ENCODE measurements at regions of chr19 and their contacts with region 1.

Region 1: DNA sequence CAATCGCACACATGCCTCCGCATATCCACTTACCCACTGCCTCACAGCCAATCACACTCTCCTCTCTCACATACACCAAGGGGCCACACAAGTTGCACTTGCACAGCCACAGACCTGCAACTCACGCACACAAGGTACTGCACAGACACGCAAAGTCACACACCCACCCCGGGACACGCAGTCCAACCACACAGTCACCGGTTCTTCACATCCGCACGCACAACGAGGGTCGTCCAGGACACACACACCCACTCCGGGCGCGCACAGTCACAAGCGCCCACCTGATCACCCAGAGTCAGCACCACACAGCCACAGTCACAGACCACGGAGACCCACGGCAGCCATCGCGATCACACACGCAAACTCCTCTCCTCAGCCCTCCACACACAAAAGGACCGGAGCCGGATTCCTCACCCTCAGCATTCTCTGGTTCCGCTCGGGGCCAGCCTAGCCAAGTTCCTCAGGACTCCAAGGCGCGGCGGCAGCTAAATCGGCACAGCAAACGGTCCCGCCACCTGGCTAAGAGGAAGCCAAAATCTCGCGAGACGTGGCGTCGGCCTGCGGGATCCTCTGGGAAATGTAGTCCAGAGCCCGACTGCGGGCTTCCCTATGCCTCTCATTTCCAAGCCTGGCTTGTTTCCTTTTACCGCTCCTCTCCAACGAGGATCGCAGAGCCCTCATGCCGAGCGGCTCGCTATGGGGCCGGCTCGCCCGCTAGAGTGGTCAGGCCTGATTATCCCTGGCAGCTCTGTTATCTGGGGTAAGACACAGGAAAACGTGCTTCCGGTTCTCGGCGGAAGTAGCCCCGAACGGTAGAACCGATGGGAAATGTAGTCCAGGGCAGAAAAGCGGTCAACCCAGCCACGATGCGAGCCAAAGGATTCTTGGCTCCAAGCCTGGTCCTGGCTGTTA is at the start of gene ZNF850:
- DNase-seq: peak; percentile 86 to 97 (median 95)
- ATAC-seq: peak; percentile 90
- H3K4me3 ChIP-seq: peak within 1 kb of the TSS; percentile 77 to 100
- H3K4me3 Mint-ChIP-seq: peak within 1 kb of the TSS; percentile 99
- H3K27ac ChIP-seq: peak within 1 kb of the TSS; percentile 85 to 89
- H3K27ac Mint-ChIP-seq: peak within 1 kb of the TSS; percentile 94
- H3K4me1 ChIP-seq: peaks cover 21% of the 10 kb centered on the region
- H3K4me1 Mint-ChIP-seq: peaks cover 23% of the 10 kb centered on the region
- H3K27me3 ChIP-seq: no peaks in the 10 kb centered on the region
- H3K27me3 Mint-ChIP-seq: no peaks in the 10 kb centered on the region
- CTCF ChIP-seq: no peak
- total RNA-seq, gene ZNF850: 1.5 to 2.7 TPM

Region 2: GRCh38 chr19:36528194-36528920 is 244.2 kb before region 1 on chr19 and contains the start of gene ZNF260:
- CTCF ChIA-PET with region 1: no interaction called
- POLR2A ChIA-PET with region 1: no interaction called
- intact Hi-C with region 1: loop called (anchors 1 kb)
- DNase-seq: peak; percentile 77 to 96 (median 92)
- ATAC-seq: peak; percentile 90
- H3K4me3 ChIP-seq: peak within 1 kb of the TSS; percentile 64 to 85
- H3K4me3 Mint-ChIP-seq: peak within 1 kb of the TSS; percentile 99
- H3K27ac ChIP-seq: peak within 1 kb of the TSS; percentile 52 to 84
- H3K27ac Mint-ChIP-seq: peak within 1 kb of the TSS; percentile 96
- H3K4me1 ChIP-seq: peaks cover 21% of the 10 kb centered on the region
- H3K4me1 Mint-ChIP-seq: peaks cover 28% of the 10 kb centered on the region
- H3K27me3 ChIP-seq: no peaks in the 10 kb centered on the region
- H3K27me3 Mint-ChIP-seq: no peaks in the 10 kb centered on the region
- CTCF ChIP-seq: no peak
- total RNA-seq, gene ZNF260: 2.8 to 4.6 TPM

Region 3: GRCh38 chr19:36665832-36666231 is 106.7 kb before region 1 on chr19:
- CTCF ChIA-PET with region 1: no interaction called
- POLR2A ChIA-PET with region 1: interaction called, 3 read pairs
- intact Hi-C with region 1: loop called in 1 of 2 experiments (anchors 1 kb)
- DNase-seq: peak in 1 of 9 experiments; percentile 8
- ATAC-seq: no peak
- H3K4me3 ChIP-seq: peak overlapping the region; percentile 62 to 63
- H3K4me3 Mint-ChIP-seq: peak overlapping the region; percentile 98
- H3K27ac ChIP-seq: peak overlapping the region; percentile 59 to 72
- H3K27ac Mint-ChIP-seq: peak overlapping the region; percentile 73
- H3K4me1 ChIP-seq: peaks cover 8% of the 10 kb centered on the region
- H3K4me1 Mint-ChIP-seq: peaks cover 35% of the 10 kb centered on the region
- H3K27me3 ChIP-seq: no peaks in the 10 kb centered on the region
- H3K27me3 Mint-ChIP-seq: no peaks in the 10 kb centered on the region
- CTCF ChIP-seq: no peak

Region 4: GRCh38 chr19:36837906-36838783 is 65.6 kb after region 1 on chr19 and contains the start of gene ZNF790:
- CTCF ChIA-PET with region 1: no interaction called
- POLR2A ChIA-PET with region 1: no interaction called
- intact Hi-C with region 1: loop called (anchors 1 kb)
- DNase-seq: peak; percentile 62 to 92 (median 81)
- ATAC-seq: peak; percentile 87
- H3K4me3 ChIP-seq: peak within 1 kb of the TSS; percentile 86 to 91
- H3K4me3 Mint-ChIP-seq: no peak within 1 kb of the TSS
- H3K27ac ChIP-seq: peak within 1 kb of the TSS; percentile 88 to 97
- H3K27ac Mint-ChIP-seq: no peak within 1 kb of the TSS
- H3K4me1 ChIP-seq: peaks cover 17% of the 10 kb centered on the region
- H3K4me1 Mint-ChIP-seq: peaks cover 21% of the 10 kb centered on the region
- H3K27me3 ChIP-seq: no peaks in the 10 kb centered on the region
- H3K27me3 Mint-ChIP-seq: no peaks in the 10 kb centered on the region
- CTCF ChIP-seq: no peak
- total RNA-seq, gene ZNF790: 2.1 to 3.6 TPM

Region 5: DNA sequence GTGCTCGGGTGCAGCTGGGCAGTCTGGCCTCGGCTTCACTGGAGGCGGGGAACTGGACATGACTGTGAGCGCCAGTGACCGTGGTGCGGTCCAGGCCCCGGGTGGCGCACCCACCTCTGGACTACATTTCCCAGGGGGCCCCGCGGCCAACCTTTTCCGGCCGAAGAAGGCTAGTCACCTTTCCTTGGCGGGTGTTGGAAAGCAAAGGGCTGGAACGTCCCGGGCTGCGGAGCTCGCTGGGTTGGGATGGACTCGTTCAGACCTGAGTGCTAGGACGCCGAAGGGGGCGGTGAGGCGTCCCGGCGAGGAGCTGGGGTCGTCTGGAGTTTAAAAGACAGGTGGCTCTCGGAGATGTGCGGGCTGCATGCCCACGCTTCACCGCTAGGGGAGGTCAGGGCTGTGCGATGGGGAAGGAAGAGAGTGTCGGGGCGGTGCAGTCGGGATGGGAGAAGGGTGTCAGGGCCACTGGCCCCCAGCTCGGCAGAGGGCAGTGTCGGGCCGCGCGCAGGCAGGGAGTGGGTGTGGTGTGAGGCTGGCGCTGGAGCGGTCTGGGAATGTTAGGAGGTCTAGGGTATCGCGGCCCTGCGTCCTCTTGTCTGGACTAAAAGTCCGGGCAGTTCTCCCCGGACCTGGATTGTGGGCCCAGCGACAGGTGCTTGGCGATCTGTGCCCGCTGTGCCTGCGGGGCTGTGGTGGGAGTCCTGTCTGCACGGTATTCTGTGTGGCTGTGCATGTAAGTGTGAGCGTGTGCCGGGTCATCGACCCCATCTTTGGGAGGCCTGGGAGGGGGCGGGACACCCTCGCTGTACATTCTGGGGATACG is 200.7 kb after region 1 on chr19:
- CTCF ChIA-PET with region 1: no interaction called
- POLR2A ChIA-PET with region 1: no interaction called
- intact Hi-C with region 1: loop called (anchors 2 kb)
- DNase-seq: peak; percentile 49 to 92 (median 77)
- ATAC-seq: peak; percentile 90
- H3K4me3 ChIP-seq: peak overlapping the region; percentile 59 to 100
- H3K4me3 Mint-ChIP-seq: peak overlapping the region; percentile 90
- H3K27ac ChIP-seq: peak overlapping the region; percentile 53 to 66
- H3K27ac Mint-ChIP-seq: peak overlapping the region; percentile 88
- H3K4me1 ChIP-seq: peaks cover 15% of the 10 kb centered on the region
- H3K4me1 Mint-ChIP-seq: peaks cover 24% of the 10 kb centered on the region
- H3K27me3 ChIP-seq: no peaks in the 10 kb centered on the region
- H3K27me3 Mint-ChIP-seq: no peaks in the 10 kb centered on the region
- CTCF ChIP-seq: no peak

Region 6: DNA sequence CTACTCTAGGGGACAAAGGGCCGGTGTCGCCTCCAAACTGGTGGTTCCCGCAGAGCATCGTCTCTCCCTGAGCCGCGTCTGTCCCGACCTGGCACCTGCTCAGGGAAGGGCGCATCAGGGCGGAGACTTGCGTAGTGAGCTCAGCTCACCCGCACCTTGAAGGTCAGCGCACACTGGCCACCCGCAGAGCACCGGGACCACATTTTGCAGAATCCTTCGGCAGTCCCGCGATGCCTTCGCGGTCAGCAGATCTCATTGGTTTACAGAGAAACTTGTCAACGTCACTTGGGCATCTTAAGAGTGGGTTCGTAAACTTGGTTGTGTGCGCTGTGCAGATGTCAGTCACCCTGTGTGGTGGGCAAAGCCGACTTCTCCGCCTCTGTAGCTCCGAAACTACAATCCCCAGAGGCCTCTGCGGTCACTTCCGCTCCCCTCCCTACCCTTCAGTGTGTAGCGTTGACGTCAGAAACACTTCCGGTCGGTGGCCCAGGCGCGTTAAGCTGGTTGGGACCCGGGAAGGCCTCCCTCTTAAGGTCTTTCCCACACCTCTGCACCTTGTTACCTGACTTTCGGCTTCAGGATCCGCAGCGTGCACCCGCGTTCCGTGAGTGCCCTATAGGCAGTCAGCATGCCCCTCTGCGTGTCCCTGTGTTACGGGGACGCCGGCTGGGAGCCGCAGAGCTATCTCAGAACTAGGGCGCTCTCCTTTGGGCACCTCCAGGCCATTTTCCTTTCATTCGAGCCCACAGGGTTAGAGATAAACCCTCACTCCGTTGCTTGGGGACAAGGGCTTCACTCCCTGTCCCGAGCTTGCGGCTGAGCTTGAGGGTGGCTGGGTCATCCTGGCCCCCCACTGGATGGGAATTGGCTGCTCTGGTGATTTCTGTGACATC is 561.9 kb after region 1 on chr19:
- CTCF ChIA-PET with region 1: no interaction called
- POLR2A ChIA-PET with region 1: no interaction called
- intact Hi-C with region 1: loop called in 1 of 2 experiments (anchors 10 kb)
- DNase-seq: peak; percentile 75 to 96 (median 87)
- ATAC-seq: peak; percentile 97
- H3K4me3 ChIP-seq: peak overlapping the region; percentile 46 to 74
- H3K4me3 Mint-ChIP-seq: peak overlapping the region; percentile 96
- H3K27ac ChIP-seq: peak overlapping the region; percentile 46 to 87
- H3K27ac Mint-ChIP-seq: peak overlapping the region; percentile 95
- H3K4me1 ChIP-seq: peaks cover 10% of the 10 kb centered on the region
- H3K4me1 Mint-ChIP-seq: peaks cover 47% of the 10 kb centered on the region
- H3K27me3 ChIP-seq: no peaks in the 10 kb centered on the region
- H3K27me3 Mint-ChIP-seq: no peaks in the 10 kb centered on the region
- CTCF ChIP-seq: no peak

Measured in CD8-positive, alpha-beta T cell (primary cell).